ENCODE measurements at regions of chr1 and their contacts with region 1.

Region 1: DNA sequence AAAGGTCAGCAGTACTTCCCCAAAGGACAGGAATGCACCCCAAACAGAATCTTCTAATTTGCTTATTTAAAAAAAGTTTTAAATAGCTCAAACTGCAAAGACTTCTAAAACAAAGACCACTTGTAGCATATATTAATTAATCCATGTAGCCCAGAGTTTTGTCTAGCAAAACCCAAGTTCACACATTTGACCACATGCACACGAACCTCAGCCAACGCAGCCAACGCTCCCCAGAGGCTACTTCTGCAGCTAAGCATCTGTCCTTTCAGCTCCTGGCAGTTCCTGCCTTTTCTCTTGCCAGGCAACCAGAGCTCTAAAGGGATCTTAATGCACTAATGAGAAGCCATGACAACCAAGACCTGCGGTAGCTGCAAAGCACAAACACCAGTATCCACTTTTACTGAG is 89.6 kb downstream of the RERE start:
- DNase-seq: no peak
- H3K4me3 ChIP-seq: no peak overlapping the region
- H3K27ac ChIP-seq: no peak overlapping the region
- H3K27me3 ChIP-seq: no peaks in the 10 kb centered on the region
- CTCF ChIP-seq: no peak

Region 2: DNA sequence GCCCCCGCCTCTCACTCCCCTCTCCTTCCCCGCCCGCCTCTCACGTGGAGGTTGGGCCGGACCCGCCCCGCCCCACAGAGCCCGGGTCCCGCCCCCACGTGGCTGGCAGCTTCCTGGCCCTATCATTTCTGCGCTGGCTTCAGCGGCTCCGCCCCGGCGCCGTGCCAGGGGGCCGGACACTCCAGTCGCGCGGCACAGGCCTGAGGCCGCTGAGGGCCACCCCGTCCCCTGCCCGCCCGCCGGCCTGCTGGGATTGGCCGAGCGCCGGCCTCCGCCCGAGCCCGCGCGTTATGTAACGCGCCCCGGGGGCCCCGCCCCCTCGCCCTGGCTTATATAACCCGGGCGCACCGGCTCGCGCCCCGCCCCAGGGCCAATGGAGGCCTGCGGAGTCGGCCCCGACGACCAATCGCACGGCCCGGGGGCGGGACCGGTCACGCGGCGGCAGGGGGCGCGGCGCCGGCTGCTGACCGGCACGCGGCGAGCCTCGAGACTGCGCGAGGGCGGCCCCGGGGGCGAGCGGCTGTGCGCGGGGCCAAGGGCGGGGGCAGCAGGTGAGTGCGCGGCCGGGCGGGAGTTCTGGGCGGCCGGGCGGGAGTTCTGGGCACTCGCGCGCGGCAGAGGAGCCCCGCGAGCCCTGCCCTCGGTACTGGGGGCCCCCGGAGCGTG is 943.9 kb before region 1 on chr1 and contains the start of gene PER3:
- CTCF ChIA-PET with region 1: no interaction called
- POLR2A ChIA-PET with region 1: no interaction called
- DNase-seq: peak; percentile 90
- H3K4me3 ChIP-seq: peak within 1 kb of the TSS; percentile 61
- H3K27ac ChIP-seq: no peak within 1 kb of the TSS
- H3K27me3 ChIP-seq: no peaks in the 10 kb centered on the region
- CTCF ChIP-seq: no peak
- polyA plus RNA-seq, gene PER3: 8.3 and 9.1 TPM in 2 replicates

Region 3: GRCh38 chr1:8510041-8510823 is 217.6 kb before region 1 on chr1:
- CTCF ChIA-PET with region 1: interaction called, 13 read pairs
- POLR2A ChIA-PET with region 1: no interaction called
- DNase-seq: peak; percentile 67
- H3K4me3 ChIP-seq: peak overlapping the region; percentile 39
- H3K27ac ChIP-seq: peak overlapping the region; percentile 88
- H3K27me3 ChIP-seq: no peaks in the 10 kb centered on the region
- CTCF ChIP-seq: no peak

Region 4: GRCh38 chr1:8560611-8561544 is 166.9 kb before region 1 on chr1:
- CTCF ChIA-PET with region 1: interaction called, 73 read pairs
- POLR2A ChIA-PET with region 1: no interaction called
- DNase-seq: no peak
- H3K4me3 ChIP-seq: no peak overlapping the region
- H3K27ac ChIP-seq: no peak overlapping the region
- H3K27me3 ChIP-seq: no peaks in the 10 kb centered on the region
- CTCF ChIP-seq: peak; percentile 95

Region 5: GRCh38 chr1:8598060-8598724 is 129.6 kb before region 1 on chr1:
- CTCF ChIA-PET with region 1: interaction called, 12 read pairs
- POLR2A ChIA-PET with region 1: no interaction called
- DNase-seq: no peak
- H3K4me3 ChIP-seq: peak overlapping the region; percentile 18; the same call in 1 of the 2 replicates
- H3K27ac ChIP-seq: peak overlapping the region; percentile 71
- H3K27me3 ChIP-seq: no peaks in the 10 kb centered on the region
- CTCF ChIP-seq: peak; percentile 63

Region 6: GRCh38 chr1:8689431-8690252 is 38.2 kb before region 1 on chr1:
- CTCF ChIA-PET with region 1: interaction called, 15 read pairs
- POLR2A ChIA-PET with region 1: no interaction called
- DNase-seq: no peak
- H3K4me3 ChIP-seq: no peak overlapping the region
- H3K27ac ChIP-seq: no peak overlapping the region
- H3K27me3 ChIP-seq: no peaks in the 10 kb centered on the region
- CTCF ChIP-seq: no peak

Region 7: DNA sequence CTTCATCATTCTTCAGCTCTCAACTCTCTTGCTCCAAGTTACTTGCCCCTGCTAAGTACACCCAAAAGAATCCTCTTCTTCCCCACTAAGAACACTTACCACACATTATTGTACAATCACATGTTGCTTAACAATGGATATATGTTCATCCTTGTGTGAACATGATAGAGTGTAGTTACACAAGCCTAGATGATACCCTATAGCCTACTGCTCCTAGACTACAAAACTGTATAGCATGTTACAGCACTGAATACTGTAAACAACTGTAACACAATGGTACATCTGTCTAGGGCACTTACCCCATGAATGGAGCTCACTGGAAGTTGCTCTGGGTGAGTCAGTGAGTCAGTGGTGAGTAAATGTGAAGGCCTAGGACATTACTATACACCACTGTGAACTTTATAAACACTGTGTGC is 12.2 kb after region 1 on chr1:
- CTCF ChIA-PET with region 1: interaction called, 18 read pairs
- POLR2A ChIA-PET with region 1: interaction called, 4 read pairs
- DNase-seq: peak; percentile 86
- H3K4me3 ChIP-seq: no peak overlapping the region
- H3K27ac ChIP-seq: peak overlapping the region; percentile 68
- H3K27me3 ChIP-seq: no peaks in the 10 kb centered on the region
- CTCF ChIP-seq: no peak